Esophagus muscularis mucosa (tissue), 4 donors: ENCODE measurements at regions of chr13 and their contacts with region 1.

Region 1: GRCh38 chr13:26985285-26985878 is 186.2 kb downstream of the USP12 start:
- DNase-seq: no peak
- H3K4me3 ChIP-seq: no peak overlapping the region
- H3K27ac ChIP-seq: peak overlapping the region; percentile 82 to 89 (median 89)
- H3K4me1 ChIP-seq: peaks cover 14 to 69% (median 60%) of the 10 kb centered on the region in 4 donors
- H3K27me3 ChIP-seq: no peaks in the 10 kb centered on the region
- CTCF ChIP-seq: peak; percentile 74 to 88 (median 78)
- EP300 ChIP-seq: no peak
- POLR2A ChIP-seq: no peak

Region 2: GRCh38 chr13:26951581-26952177 is 33.7 kb before region 1 on chr13:
- intact Hi-C with region 1: no loop called
- DNase-seq: no peak
- H3K4me3 ChIP-seq: no peak overlapping the region
- H3K27ac ChIP-seq: no peak overlapping the region
- H3K4me1 ChIP-seq: peaks cover 0 to 5% (median 2%) of the 10 kb centered on the region in 4 donors
- H3K27me3 ChIP-seq: peaks cover 0 to 3% (median 0%) of the 10 kb centered on the region in 4 donors
- CTCF ChIP-seq: no peak
- EP300 ChIP-seq: no peak
- POLR2A ChIP-seq: no peak

Region 3: GRCh38 chr13:27171827-27172494 is 186.6 kb after region 1 on chr13:
- intact Hi-C with region 1: loop called (anchors 5 kb)
- DNase-seq: no peak
- H3K4me3 ChIP-seq: peak overlapping the region; percentile 76 to 94 (median 82)
- H3K27ac ChIP-seq: peak overlapping the region; percentile 92 to 98 (median 97)
- H3K4me1 ChIP-seq: peaks cover 32 to 45% (median 41%) of the 10 kb centered on the region in 4 donors
- H3K27me3 ChIP-seq: no peaks in the 10 kb centered on the region
- CTCF ChIP-seq: peak in 2 of 3 experiments; percentile 46 to 51
- EP300 ChIP-seq: no peak
- POLR2A ChIP-seq: no peak

Region 4: GRCh38 chr13:27283906-27284493 is 298.6 kb after region 1 on chr13:
- intact Hi-C with region 1: loop called (anchors 5 kb)
- DNase-seq: no peak
- H3K4me3 ChIP-seq: no peak overlapping the region
- H3K27ac ChIP-seq: no peak overlapping the region
- H3K4me1 ChIP-seq: no peaks in the 10 kb centered on the region
- H3K27me3 ChIP-seq: no peaks in the 10 kb centered on the region
- CTCF ChIP-seq: peak; percentile 21 to 47 (median 42)
- EP300 ChIP-seq: no peak
- POLR2A ChIP-seq: no peak